Left cardiac atrium (tissue), 4 donors: ENCODE measurements at regions of chr17 and their contacts with region 1.

Region 1: DNA sequence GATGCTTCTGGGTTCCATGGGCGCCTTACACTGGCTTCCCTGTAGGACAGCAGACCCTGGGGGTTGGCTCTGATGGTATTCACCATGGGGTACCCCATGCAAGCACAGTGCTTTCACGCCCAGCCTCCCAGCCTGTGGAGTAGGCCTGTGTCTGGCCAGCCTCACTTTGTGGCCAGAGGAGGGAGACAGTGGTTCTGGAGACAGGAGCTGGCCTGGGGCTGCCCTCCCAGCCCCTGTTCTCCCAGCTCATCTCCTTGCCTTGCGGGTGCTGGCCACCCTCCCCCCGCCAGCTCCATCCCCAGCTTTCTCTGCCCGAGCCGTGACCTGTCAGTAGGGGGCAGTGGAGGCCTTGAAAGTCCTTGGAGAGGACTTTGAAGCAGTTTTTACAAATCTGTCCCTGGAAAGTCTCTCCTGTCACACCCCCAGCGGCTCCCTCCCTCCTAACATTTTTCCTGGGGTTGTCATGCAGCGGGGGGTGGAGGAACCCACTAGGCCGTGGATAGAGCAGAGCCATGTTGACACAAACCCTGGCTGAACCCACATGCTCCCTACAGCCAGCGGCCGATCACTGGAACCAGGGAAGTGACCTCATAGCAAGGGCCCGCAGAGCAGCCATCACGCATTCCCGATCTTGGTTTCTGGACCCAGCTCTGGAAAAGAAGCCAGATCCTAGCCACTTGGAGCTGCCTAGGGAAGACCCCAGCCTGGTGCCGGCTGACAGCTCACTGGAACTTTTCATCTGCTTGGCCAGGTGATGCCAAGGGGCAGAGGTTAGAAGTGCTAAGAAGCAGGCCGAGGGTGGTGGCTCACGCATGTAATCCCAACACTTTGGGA is 289.4 kb downstream of the SEC14L1 start:
- DNase-seq: peak; percentile 93
- ATAC-seq: peak; percentile 79 to 89

Region 2: GRCh38 chr17:77186141-77186604 is 244.0 kb before region 1 on chr17:
- intact Hi-C with region 1: no loop called
- DNase-seq: peak; percentile 30
- ATAC-seq: peak; percentile 66 to 67

Region 3: DNA sequence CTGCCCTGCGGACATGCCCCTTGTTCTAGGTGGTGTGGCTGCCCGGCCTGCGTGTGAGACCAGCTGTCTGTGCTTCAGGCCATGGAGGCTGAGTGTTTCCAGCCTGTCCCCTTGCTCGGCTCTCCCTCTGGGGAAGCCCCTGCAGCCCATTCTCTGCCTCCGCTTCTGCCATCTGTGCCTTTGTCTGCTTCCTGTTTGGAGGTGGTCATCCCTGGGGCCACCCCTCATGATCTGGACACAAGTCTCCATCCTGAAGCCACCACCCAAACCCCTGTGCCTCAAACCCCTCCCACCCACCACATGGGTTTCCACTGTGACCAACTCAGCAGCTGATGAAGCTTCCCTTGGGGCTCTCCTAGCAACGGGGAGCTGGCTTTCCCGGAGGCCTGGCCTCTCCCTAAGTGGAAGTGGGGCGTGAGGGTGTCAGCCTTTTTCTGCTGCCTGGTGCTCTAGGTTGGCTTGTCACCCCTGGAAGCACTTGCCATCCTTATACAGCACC is 104.5 kb before region 1 on chr17:
- intact Hi-C with region 1: loop called (anchors 2 to 5 kb)
- DNase-seq: no peak
- ATAC-seq: no peak

Region 4: DNA sequence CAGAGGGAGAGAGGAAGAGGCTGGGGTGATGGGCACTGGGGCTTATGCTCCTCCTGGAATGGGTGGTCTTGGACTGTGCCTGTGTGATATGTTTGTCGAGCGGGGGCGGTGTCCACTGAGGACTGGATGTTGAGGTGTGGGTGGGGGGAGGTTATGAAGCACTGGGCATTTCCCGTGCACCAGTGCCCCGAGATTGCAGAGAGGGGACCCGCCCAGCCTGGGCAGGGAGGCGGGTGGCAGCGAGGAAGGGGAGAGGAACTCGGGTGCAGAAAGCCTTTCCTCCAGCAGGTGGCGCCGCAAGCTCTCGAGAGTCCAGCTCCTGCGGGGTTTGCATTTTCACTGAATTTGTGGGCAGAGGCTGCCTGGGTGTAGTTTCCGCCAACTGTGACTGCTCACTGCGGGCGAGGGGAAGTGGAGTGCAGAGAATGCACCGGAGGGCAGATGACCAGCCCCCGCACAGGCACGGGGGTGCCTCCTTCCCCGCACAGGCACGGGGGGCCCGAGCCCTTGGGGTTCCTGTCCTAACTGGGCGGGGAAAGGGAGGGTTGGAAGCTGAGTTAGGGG is 98.8 kb before region 1 on chr17:
- intact Hi-C with region 1: loop called (anchors 2 to 5 kb)
- DNase-seq: peak; percentile 93
- ATAC-seq: peak; percentile 92 to 94

Region 5: DNA sequence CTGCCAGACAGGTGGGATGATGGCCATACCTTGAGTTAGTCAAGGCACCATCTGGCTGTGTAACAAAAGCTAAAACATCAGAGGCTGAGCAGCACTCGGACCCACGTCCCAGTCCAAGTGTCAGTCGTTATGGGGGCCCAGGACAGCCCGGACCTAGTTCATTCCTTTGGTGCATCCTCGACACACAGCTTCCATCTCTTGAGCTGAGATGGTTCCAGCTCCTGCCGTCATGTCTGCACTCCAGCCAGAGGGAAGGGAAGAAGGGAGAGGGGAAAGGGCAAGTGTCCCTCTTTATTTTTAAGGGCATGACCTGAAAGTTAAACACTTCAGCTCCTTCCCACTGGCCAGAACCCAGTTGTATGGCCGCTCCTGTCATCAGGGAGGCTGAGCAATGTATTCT is 71.3 kb before region 1 on chr17:
- intact Hi-C with region 1: no loop called
- DNase-seq: no peak
- ATAC-seq: no peak

Region 6: GRCh38 chr17:77372444-77373298 is 57.5 kb before region 1 on chr17:
- intact Hi-C with region 1: loop called (anchors 10 kb)
- DNase-seq: peak; percentile 88
- ATAC-seq: peak; percentile 73 to 74

Region 7: GRCh38 chr17:77494664-77495435 is 64.7 kb after region 1 on chr17:
- intact Hi-C with region 1: loop called (anchors 2 to 5 kb)
- DNase-seq: peak; percentile 80
- ATAC-seq: peak; percentile 62 to 69